Panc1 (cell line): ENCODE measurements at regions of chr11 and their contacts with region 1.

Region 1: GRCh38 chr11:102410382-102410784 is 42.2 kb downstream of the TMEM123 start:
- DNase-seq: no peak
- ATAC-seq: peak; percentile 58
- H3K4me3 ChIP-seq: no peak overlapping the region
- H3K27ac ChIP-seq: peak overlapping the region; percentile 65
- H3K4me1 ChIP-seq: peaks cover 56% of the 10 kb centered on the region
- H3K27me3 ChIP-seq: no peaks in the 10 kb centered on the region
- CTCF ChIP-seq: no peak

Region 2: GRCh38 chr11:102109896-102110760 is 300.3 kb before region 1 on chr11 and contains the start of gene YAP1:
- CTCF ChIA-PET with region 1: no interaction called
- POLR2A ChIA-PET with region 1: no interaction called
- in situ Hi-C with region 1: no loop called
- intact Hi-C with region 1: no loop called
- DNase-seq: peak; percentile 54
- ATAC-seq: peak; percentile 81
- H3K4me3 ChIP-seq: peak within 1 kb of the TSS; percentile 80 to 83
- H3K27ac ChIP-seq: peak within 1 kb of the TSS; percentile 99
- H3K4me1 ChIP-seq: peaks cover 36% of the 10 kb centered on the region
- H3K27me3 ChIP-seq: no peaks in the 10 kb centered on the region
- CTCF ChIP-seq: no peak
- total RNA-seq, gene YAP1: 158 TPM

Region 3: DNA sequence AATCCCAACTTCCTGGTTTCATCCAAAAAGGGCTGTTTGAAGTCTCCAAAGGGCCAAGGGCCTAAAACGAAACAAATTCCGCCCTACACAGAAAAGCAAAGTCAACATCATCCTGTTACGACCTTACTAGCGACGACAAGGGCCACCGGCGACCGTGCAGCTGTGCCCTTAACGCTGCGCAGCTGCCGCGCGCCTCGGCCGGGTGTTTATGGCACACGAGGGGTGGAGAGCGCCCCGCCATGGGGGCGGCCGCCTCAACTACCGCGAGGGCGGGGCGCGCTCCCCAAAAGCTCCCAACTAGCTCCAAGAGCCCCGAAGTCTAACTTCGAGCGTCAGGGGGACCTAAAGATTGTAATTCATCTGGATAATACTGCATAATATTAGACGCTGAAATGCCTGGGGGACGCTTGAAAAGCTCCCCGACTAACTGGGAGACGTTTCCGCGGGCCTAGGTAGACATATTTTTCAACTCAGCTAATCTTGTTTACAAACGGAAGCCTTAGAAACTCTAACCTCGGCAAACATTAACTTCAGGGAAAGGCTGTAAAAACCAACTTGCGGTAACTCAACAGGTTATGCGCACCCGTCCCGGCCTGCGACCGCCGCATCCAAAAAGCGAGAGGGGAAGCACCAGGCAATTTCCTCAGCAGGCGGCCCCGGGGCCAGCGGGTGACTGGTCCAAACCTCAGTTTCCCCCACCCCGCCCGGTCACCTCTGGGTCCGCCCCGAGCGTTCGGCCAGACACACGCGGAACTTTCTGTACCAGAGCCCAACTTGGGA is 41.5 kb after region 1 on chr11:
- CTCF ChIA-PET with region 1: no interaction called
- POLR2A ChIA-PET with region 1: no interaction called
- in situ Hi-C with region 1: no loop called
- intact Hi-C with region 1: loop called (anchors 5 kb)
- DNase-seq: no peak
- ATAC-seq: peak; percentile 65
- H3K4me3 ChIP-seq: peak overlapping the region; percentile 73 to 84
- H3K27ac ChIP-seq: peak overlapping the region; percentile 98
- H3K4me1 ChIP-seq: peaks cover 64% of the 10 kb centered on the region
- H3K27me3 ChIP-seq: no peaks in the 10 kb centered on the region
- CTCF ChIP-seq: peak; percentile 26